ENCODE measurements at regions of chr12 and their contacts with region 1.

Region 1: DNA sequence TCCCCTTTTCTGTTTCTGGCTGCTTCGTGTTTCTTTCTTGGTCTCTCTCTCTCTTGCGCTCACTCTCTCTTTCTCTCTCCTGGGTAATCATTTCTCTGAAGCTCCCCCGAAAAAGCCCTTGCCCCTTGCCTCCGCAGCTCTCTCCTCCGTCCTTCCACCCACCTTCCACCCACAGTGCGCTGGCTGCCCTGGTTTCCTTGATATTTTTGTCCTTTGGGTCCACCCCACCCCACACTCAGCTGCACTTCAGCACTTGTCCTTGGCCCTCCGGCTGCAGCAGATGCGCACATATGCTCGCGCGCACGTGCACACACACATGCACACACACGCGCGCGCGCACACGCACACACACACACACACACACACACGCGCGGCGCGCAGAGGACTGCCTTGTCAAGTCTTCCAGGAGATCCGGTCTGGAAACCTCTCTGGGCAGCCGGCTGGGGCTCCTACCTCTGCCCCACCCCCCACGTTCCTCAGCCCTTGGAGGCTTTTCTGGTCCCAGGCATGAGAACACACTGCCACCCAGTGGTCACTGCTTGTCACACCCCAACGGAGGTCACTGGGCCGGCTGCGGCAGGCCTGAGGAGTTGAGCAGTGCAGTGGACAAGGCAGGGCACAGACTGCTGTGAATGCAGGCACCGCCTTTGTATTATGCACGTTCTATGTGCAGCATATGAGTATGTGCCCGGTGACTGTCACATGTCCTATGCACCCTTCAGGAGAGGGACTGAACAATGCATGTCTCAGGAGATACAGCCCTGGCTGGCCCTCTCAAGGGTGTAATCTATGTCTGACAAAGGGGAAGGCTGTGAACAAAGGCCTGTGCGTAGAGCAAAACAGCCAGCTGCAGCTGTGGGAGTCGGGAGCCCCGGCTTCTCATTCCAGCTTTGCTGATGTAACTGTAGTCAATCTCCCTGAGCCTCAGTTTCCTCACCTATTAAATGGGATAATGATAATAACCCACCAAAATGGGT is 6.5 kb downstream of the LAG3 start:
- DNase-seq: peak; percentile 92 to 97
- ATAC-seq: peak; percentile 94 to 97 (median 96)
- H3K4me3 ChIP-seq: peak overlapping the region in 9 of 10 donors; percentile 35 to 60 (median 43)
- H3K27ac ChIP-seq: peak overlapping the region in 9 of 10 donors; percentile 49 to 73 (median 62)
- H3K4me1 ChIP-seq: peaks cover 0 to 30% (median 15%) of the 10 kb centered on the region in 9 donors
- H3K27me3 ChIP-seq: peaks cover 0 to 40% (median 4%) of the 10 kb centered on the region in 7 donors
- CTCF ChIP-seq: peak in 8 of 9 donors; percentile 92 to 97 (median 96)

Region 2: GRCh38 chr12:6735448-6736191 is 43.2 kb before region 1 on chr12:
- intact Hi-C with region 1: loop called (anchors 1 to 5 kb)
- DNase-seq: peak; percentile 52 to 68
- ATAC-seq: peak; percentile 86 to 92 (median 90)
- H3K4me3 ChIP-seq: no peak overlapping the region
- H3K27ac ChIP-seq: peak overlapping the region in 7 of 10 donors; percentile 10 to 56 (median 49)
- H3K4me1 ChIP-seq: peaks cover 0 to 12% (median 7%) of the 10 kb centered on the region in 9 donors
- H3K27me3 ChIP-seq: no peaks in the 10 kb centered on the region
- CTCF ChIP-seq: peak; percentile 44 to 82 (median 73)

Region 3: DNA sequence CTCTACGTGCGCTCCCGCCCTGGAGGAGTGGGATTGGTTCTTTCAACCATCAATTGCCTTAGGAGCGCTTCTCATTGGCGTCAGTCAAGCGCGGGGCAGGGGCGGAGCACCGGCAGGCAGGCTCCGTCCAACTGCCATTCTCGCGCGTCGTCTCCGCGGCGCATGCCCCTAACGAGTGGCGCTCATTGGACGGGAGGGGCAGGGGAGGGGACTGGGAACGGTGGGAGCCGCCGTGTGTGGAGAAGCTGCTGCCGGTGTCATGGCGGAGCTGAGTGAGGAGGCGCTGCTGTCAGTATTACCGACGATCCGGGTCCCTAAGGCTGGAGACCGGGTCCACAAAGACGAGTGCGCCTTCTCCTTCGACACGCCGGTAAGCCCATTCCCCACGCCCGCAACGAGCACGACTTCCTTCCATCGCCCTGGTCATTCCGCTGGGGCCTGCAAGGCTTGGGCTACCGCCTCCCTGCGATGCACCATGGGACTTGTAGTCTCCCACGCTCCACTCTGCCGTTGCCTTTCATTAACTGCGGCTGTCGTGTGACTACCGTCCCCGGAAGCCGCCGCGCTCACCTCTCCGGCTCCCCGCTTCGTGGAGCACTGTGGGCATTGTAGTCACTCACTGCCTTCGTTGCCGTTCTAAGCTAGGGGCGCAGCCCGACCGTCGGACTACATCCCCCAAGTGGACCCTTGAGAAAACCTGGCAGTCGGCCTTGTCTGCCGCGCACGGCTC is 73.2 kb after region 1 on chr12 and contains the start of gene USP5:
- intact Hi-C with region 1: no loop called
- DNase-seq: peak; percentile 99
- ATAC-seq: peak; percentile 91 to 96 (median 92)
- H3K4me3 ChIP-seq: peak within 1 kb of the TSS; percentile 50 to 93 (median 68)
- H3K27ac ChIP-seq: peak within 1 kb of the TSS; percentile 18 to 99 (median 94)
- H3K4me1 ChIP-seq: peaks cover 3 to 26% (median 16%) of the 10 kb centered on the region in 9 donors
- H3K27me3 ChIP-seq: no peaks in the 10 kb centered on the region
- CTCF ChIP-seq: peak in 4 of 9 donors; percentile 8 to 36 (median 10)
- total RNA-seq, gene USP5: 64.8 to 95.5 (median 74.1) TPM

Region 4: GRCh38 chr12:7374423-7375144 is 595.7 kb after region 1 on chr12:
- intact Hi-C with region 1: no loop called
- DNase-seq: peak in 1 of 2 donors; percentile 20
- ATAC-seq: no peak
- H3K4me3 ChIP-seq: no peak overlapping the region
- H3K27ac ChIP-seq: no peak overlapping the region
- H3K4me1 ChIP-seq: no peaks in the 10 kb centered on the region
- H3K27me3 ChIP-seq: peaks cover 0 to 42% (median 0%) of the 10 kb centered on the region in 7 donors
- CTCF ChIP-seq: peak in 4 of 9 donors; percentile 8 to 41 (median 16)